Activated T-helper 1 cell treated with anti-CD3 and anti-CD28 coated beads, Interleukin-12 subunit alpha, Interleukin-12 subunit beta, Interleukin-2, Interleukin-4 antibody, amounts not matched to agents 30 ng/mL and 10 ng/mL and 1 ng/mL, durations not matched to agents 14 hours and 24 hours and 36 hours (primary cell): ENCODE measurements at regions of chr1 and their contacts with region 1.

Region 1: DNA sequence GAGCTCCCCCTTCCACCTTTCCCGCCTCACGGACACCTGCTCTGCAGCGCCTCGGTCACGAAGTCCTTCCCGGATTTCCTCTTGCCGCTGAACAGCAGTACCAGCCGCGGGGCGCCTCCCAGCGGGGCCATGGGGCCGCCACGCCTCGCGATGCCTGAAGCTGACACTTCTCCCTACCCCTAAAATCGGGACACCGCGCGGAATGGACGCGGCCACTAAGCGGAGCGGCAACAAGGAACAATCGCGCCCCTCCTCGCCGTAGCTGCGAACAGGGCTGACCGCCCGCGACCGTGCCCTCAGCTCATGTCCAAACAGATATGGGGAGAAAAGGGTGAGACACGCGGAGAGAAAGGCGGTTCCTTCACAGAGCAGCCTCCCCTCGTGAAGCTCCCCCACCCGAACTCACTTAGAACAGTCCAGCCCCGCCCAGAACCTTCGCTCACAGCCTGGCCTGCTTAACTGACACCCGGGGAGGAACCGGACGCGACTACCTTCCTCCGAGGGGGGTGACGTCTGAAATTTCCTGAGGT is at the start of gene PMVK:
- DNase-seq: peak; percentile 92
- H3K4me3 Mint-ChIP-seq: peak within 1 kb of the TSS; percentile 93
- H3K27ac Mint-ChIP-seq: peak within 1 kb of the TSS; percentile 95
- H3K4me1 Mint-ChIP-seq: peaks cover 53% of the 10 kb centered on the region
- H3K27me3 Mint-ChIP-seq: no peaks in the 10 kb centered on the region
- total RNA-seq, gene PMVK: 42.5 and 43.3 TPM in 2 replicates

Region 2: GRCh38 chr1:154878371-154879022 is 58.1 kb before region 1 on chr1:
- intact Hi-C with region 1: loop called (anchors 2 kb)
- DNase-seq: peak; percentile 64
- H3K4me3 Mint-ChIP-seq: no peak overlapping the region
- H3K27ac Mint-ChIP-seq: no peak overlapping the region
- H3K4me1 Mint-ChIP-seq: peaks cover 18% of the 10 kb centered on the region
- H3K27me3 Mint-ChIP-seq: peaks cover 7% of the 10 kb centered on the region

Region 3: DNA sequence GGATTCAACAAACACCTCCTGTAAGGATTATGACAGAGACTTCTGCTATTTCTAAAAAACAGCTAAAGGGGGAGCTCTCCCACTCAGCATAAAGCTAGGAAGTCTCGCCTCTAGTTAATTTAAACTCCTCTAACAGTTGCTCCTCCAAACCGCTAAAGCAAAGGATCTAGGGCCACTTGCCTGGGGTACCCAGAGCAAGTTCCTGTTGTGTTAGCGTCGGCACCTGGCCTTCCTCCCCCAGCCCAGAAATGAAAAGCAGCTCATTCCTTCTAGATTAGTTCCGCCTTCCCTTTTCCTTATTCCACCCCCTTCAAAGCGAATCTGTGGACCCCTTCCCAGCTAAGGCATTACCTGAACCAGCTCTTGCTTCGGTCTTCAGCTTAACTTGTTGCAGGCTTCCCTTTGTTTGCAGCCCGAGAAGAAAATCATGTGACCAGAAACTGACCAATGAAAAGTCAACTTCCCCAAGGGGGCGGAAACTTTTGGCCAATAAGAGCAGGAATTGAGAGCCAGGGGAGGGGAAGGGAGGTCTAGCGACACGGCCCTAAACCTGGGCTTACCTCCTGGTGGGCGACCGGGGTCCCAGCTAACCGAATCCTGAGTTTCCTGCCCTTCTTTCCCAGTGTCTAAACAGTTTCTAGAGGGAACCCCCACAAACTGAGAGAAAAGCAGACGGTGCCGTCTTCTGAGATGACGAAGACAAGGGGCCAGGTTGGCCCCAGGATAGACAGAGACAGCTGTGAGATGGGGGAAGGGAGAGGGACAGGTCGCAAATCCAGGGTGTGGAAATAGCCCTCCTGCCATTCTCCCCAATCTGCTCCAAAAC is 19.3 kb after region 1 on chr1 and contains the start of gene PBXIP1:
- intact Hi-C with region 1: loop called (anchors 1 kb)
- DNase-seq: peak; percentile 86
- H3K4me3 Mint-ChIP-seq: peak within 1 kb of the TSS; percentile 94
- H3K27ac Mint-ChIP-seq: peak within 1 kb of the TSS; percentile 100
- H3K4me1 Mint-ChIP-seq: peaks cover 65% of the 10 kb centered on the region
- H3K27me3 Mint-ChIP-seq: peaks cover 2% of the 10 kb centered on the region
- total RNA-seq, gene PBXIP1: 25.1 and 27.9 TPM in 2 replicates

Region 4: GRCh38 chr1:154961497-154962262 is 25.1 kb after region 1 on chr1 and contains the start of gene PYGO2:
- intact Hi-C with region 1: loop called (anchors 1 kb)
- DNase-seq: peak; percentile 82
- H3K4me3 Mint-ChIP-seq: peak within 1 kb of the TSS; percentile 96
- H3K27ac Mint-ChIP-seq: peak within 1 kb of the TSS; percentile 93
- H3K4me1 Mint-ChIP-seq: peaks cover 36% of the 10 kb centered on the region
- H3K27me3 Mint-ChIP-seq: peaks cover 2% of the 10 kb centered on the region
- total RNA-seq, gene PYGO2: 34.7 and 35.0 TPM in 2 replicates

Region 5: GRCh38 chr1:154982897-154983648 is 46.5 kb after region 1 on chr1 and contains the start of gene FLAD1:
- intact Hi-C with region 1: loop called (anchors 1 kb)
- DNase-seq: peak; percentile 96
- H3K4me3 Mint-ChIP-seq: no peak within 1 kb of the TSS
- H3K27ac Mint-ChIP-seq: peak within 1 kb of the TSS; percentile 42
- H3K4me1 Mint-ChIP-seq: peaks cover 8% of the 10 kb centered on the region
- H3K27me3 Mint-ChIP-seq: no peaks in the 10 kb centered on the region
- total RNA-seq, gene FLAD1: 69.2 and 74.3 TPM in 2 replicates

Region 6: DNA sequence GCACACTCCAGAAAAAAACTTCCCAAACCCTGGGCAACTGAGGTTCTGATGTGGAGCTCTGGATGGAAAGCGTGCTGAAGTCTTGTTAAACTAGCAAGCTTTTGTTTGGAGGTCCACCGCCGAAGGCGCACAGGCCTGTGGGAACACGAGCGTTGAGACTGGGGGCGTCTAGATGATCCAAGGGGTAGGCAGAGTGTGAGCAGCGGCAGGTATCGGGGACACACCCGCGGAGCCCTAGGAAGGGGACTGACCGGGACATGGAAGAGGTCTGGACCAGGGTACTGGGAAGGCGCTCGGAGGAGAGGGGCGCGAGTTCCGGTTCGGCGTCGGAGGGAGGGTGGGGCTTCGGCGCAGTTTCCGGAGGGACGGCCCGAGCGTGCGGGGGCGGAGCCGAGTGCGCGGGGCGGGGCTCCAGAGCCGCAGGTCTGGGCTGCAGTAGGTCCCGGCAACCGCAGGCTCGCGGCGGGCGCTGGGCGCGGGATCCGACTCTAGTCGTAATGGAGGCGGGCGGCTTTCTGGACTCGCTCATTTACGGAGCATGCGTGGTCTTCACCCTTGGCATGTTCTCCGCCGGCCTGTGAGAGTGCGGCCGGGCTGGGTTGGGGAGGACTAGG is 198.9 kb after region 1 on chr1 and contains the start of gene SLC50A1:
- intact Hi-C with region 1: loop called (anchors 1 kb)
- DNase-seq: peak; percentile 91
- H3K4me3 Mint-ChIP-seq: peak within 1 kb of the TSS; percentile 94
- H3K27ac Mint-ChIP-seq: peak within 1 kb of the TSS; percentile 99
- H3K4me1 Mint-ChIP-seq: peaks cover 42% of the 10 kb centered on the region
- H3K27me3 Mint-ChIP-seq: peaks cover 5% of the 10 kb centered on the region
- total RNA-seq, gene SLC50A1: 45.7 and 47.7 TPM in 2 replicates